ENCODE measurements at regions of chr10 and their contacts with region 1.

Region 1: GRCh38 chr10:68331455-68332258 is at the start of gene HNRNPH3:
- DNase-seq: peak; percentile 97 to 100
- ATAC-seq: peak; percentile 83 to 94 (median 85)
- H3K4me3 ChIP-seq: peak within 1 kb of the TSS; percentile 97
- H3K4me3 Mint-ChIP-seq: peak within 1 kb of the TSS; percentile 98
- H3K27ac ChIP-seq: peak within 1 kb of the TSS; percentile 95
- H3K27ac Mint-ChIP-seq: peak within 1 kb of the TSS; percentile 97 to 99
- H3K4me1 ChIP-seq: peaks cover 11% of the 10 kb centered on the region
- H3K4me1 Mint-ChIP-seq: peaks cover 54 to 55% of the 10 kb centered on the region in 2 donors
- H3K27me3 ChIP-seq: no peaks in the 10 kb centered on the region
- H3K27me3 Mint-ChIP-seq: no peaks in the 10 kb centered on the region
- CTCF ChIP-seq: no peak
- total RNA-seq, gene HNRNPH3: 132 to 162 (median 142) TPM

Region 2: GRCh38 chr10:67764012-67764822 is 567.4 kb before region 1 on chr10:
- intact Hi-C with region 1: loop called (anchors 5 kb)
- DNase-seq: peak; percentile 98 to 99
- ATAC-seq: peak; percentile 83 to 92 (median 83)
- H3K4me3 ChIP-seq: peak overlapping the region; percentile 88
- H3K4me3 Mint-ChIP-seq: peak overlapping the region; percentile 93
- H3K27ac ChIP-seq: peak overlapping the region; percentile 91
- H3K27ac Mint-ChIP-seq: peak overlapping the region; percentile 98
- H3K4me1 ChIP-seq: peaks cover 9% of the 10 kb centered on the region
- H3K4me1 Mint-ChIP-seq: peaks cover 10 to 24% of the 10 kb centered on the region in 2 donors
- H3K27me3 ChIP-seq: no peaks in the 10 kb centered on the region
- H3K27me3 Mint-ChIP-seq: peaks cover 4 to 13% of the 10 kb centered on the region in 2 donors
- CTCF ChIP-seq: no peak

Region 3: GRCh38 chr10:67884313-67884841 is 447.3 kb before region 1 on chr10 and contains the start of gene SIRT1:
- intact Hi-C with region 1: loop called (anchors 5 kb)
- DNase-seq: peak; percentile 90 to 95
- ATAC-seq: peak; percentile 74 to 87 (median 79)
- H3K4me3 ChIP-seq: peak within 1 kb of the TSS; percentile 63
- H3K4me3 Mint-ChIP-seq: peak within 1 kb of the TSS; percentile 98
- H3K27ac ChIP-seq: peak within 1 kb of the TSS; percentile 87
- H3K27ac Mint-ChIP-seq: peak within 1 kb of the TSS; percentile 95
- H3K4me1 ChIP-seq: peaks cover 23% of the 10 kb centered on the region
- H3K4me1 Mint-ChIP-seq: peaks cover 37 to 46% of the 10 kb centered on the region in 2 donors
- H3K27me3 ChIP-seq: no peaks in the 10 kb centered on the region
- H3K27me3 Mint-ChIP-seq: no peaks in the 10 kb centered on the region
- CTCF ChIP-seq: no peak
- total RNA-seq, gene SIRT1: 38.2 to 51.0 (median 48.2) TPM

Region 4: GRCh38 chr10:68231106-68231816 is 100.4 kb before region 1 on chr10:
- intact Hi-C with region 1: no loop called
- DNase-seq: peak in 1 of 2 donors; percentile 43
- ATAC-seq: peak in 2 of 3 donors; percentile 35 to 78
- H3K4me3 ChIP-seq: peak overlapping the region; percentile 36
- H3K4me3 Mint-ChIP-seq: peak overlapping the region; percentile 78
- H3K27ac ChIP-seq: no peak overlapping the region
- H3K27ac Mint-ChIP-seq: no peak overlapping the region
- H3K4me1 ChIP-seq: peaks cover 10% of the 10 kb centered on the region
- H3K4me1 Mint-ChIP-seq: peaks cover 0 to 5% of the 10 kb centered on the region in 2 donors
- H3K27me3 ChIP-seq: peaks cover 14% of the 10 kb centered on the region
- H3K27me3 Mint-ChIP-seq: peaks cover 29 to 52% of the 10 kb centered on the region in 2 donors
- CTCF ChIP-seq: no peak

Region 5: GRCh38 chr10:68406815-68407548 is 75.3 kb after region 1 on chr10 and contains the start of gene RUFY2:
- intact Hi-C with region 1: loop called (anchors 2 kb)
- DNase-seq: peak; percentile 81 to 86
- ATAC-seq: peak; percentile 95 to 98 (median 97)
- H3K4me3 ChIP-seq: peak within 1 kb of the TSS; percentile 96
- H3K4me3 Mint-ChIP-seq: peak within 1 kb of the TSS; percentile 93
- H3K27ac ChIP-seq: peak within 1 kb of the TSS; percentile 59
- H3K27ac Mint-ChIP-seq: peak within 1 kb of the TSS; percentile 65 to 91
- H3K4me1 ChIP-seq: peaks cover 12% of the 10 kb centered on the region
- H3K4me1 Mint-ChIP-seq: peaks cover 20 to 21% of the 10 kb centered on the region in 2 donors
- H3K27me3 ChIP-seq: no peaks in the 10 kb centered on the region
- H3K27me3 Mint-ChIP-seq: no peaks in the 10 kb centered on the region
- CTCF ChIP-seq: peak; percentile 88
- total RNA-seq, gene RUFY2: 24.7 to 31.9 (median 31.4) TPM

Region 6: DNA sequence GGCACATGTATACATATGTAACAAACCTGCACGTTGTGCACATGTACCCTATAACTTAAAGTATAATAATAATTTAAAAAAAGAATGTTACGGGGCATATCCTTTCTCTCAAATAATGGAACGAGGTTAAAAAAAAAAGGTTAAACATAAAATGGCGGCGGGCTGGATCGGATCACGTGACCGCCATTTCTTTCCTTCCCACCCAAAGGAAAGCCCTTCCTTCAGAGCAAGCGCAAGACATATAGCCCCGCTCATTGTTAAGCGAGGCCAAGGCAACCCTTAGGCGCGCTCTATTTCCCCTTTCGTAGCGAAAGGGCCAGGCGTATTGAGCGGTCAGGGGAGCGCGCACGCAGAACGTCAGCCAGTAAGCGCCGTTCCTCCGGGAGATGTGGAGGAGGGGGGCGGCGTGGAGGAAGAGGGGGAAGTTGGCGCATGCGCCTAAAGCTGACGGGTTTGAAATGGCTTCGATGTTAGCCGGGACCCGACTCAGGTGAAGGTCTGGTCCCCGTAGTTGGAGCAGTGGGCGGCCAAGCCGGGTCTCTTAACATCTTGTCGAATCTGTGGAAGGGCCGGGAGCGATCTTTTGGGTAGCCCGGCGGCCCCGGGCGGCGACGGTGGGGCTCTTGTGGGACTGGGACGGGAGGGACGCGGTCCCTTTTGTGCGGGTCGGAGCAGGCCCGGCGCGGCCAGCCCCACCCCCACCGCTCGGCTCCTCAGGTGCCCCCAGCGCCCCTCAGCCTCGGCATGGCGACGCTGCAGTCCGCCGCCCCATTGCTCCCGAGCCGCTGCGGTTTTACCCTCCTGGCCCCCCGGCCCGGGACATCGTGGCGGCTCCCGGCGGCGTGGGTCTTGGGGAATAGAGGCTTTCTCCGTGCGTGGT is 389.4 kb after region 1 on chr10 and contains the start of gene CCAR1:
- intact Hi-C with region 1: loop called (anchors 5 kb)
- DNase-seq: peak; percentile 92 to 99
- ATAC-seq: peak; percentile 91 to 99 (median 95)
- H3K4me3 ChIP-seq: peak within 1 kb of the TSS; percentile 73
- H3K4me3 Mint-ChIP-seq: peak within 1 kb of the TSS; percentile 99
- H3K27ac ChIP-seq: peak within 1 kb of the TSS; percentile 97
- H3K27ac Mint-ChIP-seq: peak within 1 kb of the TSS; percentile 97 to 99
- H3K4me1 ChIP-seq: peaks cover 17% of the 10 kb centered on the region
- H3K4me1 Mint-ChIP-seq: peaks cover 10 to 18% of the 10 kb centered on the region in 2 donors
- H3K27me3 ChIP-seq: no peaks in the 10 kb centered on the region
- H3K27me3 Mint-ChIP-seq: no peaks in the 10 kb centered on the region
- CTCF ChIP-seq: no peak
- total RNA-seq, gene CCAR1: 73.7 to 84.1 (median 77.6) TPM

Measured in natural killer cell (primary cell).